Calu3 (cell line): ENCODE measurements at regions of chr14 and their contacts with region 1.

Region 1: DNA sequence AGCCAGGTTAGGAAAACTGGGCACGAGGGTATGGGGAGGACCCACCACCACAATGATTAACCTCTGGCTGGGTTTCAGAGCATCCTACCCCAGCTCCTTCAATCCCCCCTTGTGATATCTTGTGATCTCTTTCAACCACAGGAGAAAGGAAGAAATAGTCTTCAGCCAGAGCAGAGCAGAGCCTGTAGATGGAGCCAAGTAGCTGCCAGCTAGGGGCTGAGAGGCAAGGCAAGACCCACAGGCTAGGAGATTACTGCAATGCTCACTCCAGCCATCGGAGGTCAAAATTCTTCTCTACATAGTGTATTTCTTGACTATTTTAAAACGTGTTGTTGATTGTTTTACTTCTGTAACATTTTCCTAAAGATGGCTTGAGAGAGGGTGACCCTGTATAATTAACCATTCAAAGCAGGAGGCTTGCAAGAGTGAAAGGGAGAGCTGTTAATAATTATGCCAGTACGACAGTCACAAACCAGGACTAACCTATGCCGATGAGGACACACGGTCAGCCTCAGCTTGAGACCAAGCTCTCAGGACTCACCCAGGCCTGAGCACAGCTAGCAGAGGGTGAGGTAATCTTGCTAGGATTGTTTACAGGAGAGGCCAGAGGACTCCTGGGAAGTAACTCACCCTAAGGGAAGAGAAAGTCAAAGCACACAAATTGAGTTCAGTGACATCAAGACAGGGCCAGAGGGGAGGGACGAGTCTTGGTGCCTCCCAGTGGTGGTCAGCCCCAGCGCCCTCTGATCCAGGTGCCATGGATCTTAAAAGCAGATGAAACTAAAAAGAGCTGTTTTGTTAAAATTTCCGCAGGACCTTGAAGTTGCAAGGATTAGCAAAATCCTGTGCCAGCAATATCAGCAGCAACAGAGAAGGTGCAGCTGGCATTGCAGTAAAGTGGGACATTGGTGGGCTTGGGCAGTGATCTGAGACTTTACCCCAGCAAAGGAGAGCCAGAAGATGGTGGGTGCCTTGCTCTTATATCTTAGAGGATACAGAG is 29.8 kb upstream of the CDKN3 start:
- DNase-seq: peak; percentile 56
- H3K4me3 Mint-ChIP-seq: peak overlapping the region; percentile 38
- H3K27ac Mint-ChIP-seq: no peak overlapping the region
- H3K4me1 Mint-ChIP-seq: peaks cover 27% of the 10 kb centered on the region
- H3K27me3 Mint-ChIP-seq: peaks cover 13% of the 10 kb centered on the region
- CTCF ChIP-seq: no peak

Region 2: DNA sequence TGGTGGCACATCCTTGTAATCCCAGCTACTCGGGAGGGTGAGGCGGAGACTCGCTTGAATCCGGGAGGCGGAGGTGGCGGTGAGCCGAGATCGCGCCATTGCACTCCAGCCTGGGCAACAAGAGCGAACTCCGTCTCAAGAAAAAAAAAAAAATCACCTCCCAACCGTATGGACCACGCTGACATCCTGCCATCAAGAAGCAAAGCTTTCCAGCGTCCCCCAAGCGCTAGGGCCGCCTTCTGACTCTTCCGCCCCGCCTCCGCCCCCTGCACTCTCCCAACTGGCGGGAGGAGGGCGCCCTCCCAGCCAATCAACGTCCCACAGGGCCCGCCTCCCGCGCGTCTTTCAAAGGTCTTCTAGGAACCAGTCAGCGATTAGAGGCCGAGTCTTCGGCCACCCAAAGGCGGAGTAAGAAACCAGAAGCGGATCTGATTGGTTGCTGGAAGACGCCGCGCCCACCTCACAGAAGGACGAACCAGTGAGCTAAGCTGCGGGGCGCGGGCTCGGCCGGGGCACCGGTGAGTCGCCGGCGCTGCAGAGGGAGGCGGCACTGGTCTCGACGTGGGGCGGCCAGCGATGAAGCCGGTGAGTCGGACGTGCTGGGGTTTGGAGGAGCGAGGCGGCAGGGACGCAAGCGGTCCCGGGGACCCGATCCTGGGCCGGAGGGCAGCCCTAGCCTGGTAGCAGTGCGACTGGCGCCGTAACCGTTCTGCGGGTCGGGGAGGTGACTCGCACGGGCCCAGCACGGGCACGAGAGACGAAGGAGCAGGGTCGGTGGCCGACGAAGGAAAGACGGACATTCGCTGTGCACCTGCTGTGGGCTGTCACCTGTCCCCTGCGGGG is 29.7 kb after region 1 on chr14 and contains the start of gene CDKN3:
- CTCF ChIA-PET with region 1: interaction called, 11 read pairs
- intact Hi-C with region 1: no loop called
- DNase-seq: peak; percentile 96
- H3K4me3 Mint-ChIP-seq: peak within 1 kb of the TSS; percentile 96
- H3K27ac Mint-ChIP-seq: peak within 1 kb of the TSS; percentile 84
- H3K4me1 Mint-ChIP-seq: peaks cover 15% of the 10 kb centered on the region
- H3K27me3 Mint-ChIP-seq: no peaks in the 10 kb centered on the region
- CTCF ChIP-seq: peak; percentile 45
- total RNA-seq, gene CDKN3: 41.1 and 50.3 TPM in 2 replicates

Region 3: DNA sequence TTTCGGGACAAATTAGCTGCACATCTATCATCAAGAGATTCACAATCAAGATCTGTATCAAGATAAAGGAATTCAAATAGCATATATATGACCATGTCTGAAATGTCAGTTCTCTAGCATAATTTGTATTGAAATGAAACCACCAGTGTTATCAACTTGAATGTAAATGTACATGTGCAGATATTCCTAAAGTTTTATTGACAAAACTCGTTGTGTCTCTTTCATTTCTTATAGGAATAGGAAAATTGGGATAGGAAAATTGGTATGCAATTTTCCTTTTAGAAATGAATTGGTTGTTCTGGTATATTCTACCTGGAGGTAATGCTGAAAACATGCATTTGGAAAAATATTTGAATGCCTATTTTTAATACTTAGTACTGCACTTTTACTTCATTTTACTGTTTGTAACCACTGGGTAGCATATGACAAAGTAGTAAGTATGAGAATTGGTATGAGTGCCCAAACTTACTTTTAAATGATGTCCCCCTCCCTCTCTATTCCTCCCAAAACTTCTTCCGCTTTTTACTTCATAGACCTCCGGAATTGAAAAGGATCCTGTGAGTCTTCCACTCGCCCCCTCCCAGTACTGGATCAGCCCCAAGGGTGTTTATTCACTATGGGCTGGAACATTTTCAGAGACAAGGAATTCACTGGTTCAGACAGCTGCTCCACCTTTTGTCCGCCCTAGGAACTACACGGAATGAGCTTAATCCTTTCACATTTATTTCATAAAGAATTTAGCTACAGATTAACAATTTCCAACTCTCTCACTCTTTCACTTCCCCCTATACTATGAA is 53.2 kb after region 1 on chr14:
- CTCF ChIA-PET with region 1: interaction called, 35 read pairs
- intact Hi-C with region 1: loop called (anchors 1 kb)
- DNase-seq: peak; percentile 48
- H3K4me3 Mint-ChIP-seq: no peak overlapping the region
- H3K27ac Mint-ChIP-seq: no peak overlapping the region
- H3K4me1 Mint-ChIP-seq: peaks cover 8% of the 10 kb centered on the region
- H3K27me3 Mint-ChIP-seq: no peaks in the 10 kb centered on the region
- CTCF ChIP-seq: peak; percentile 44

Region 4: DNA sequence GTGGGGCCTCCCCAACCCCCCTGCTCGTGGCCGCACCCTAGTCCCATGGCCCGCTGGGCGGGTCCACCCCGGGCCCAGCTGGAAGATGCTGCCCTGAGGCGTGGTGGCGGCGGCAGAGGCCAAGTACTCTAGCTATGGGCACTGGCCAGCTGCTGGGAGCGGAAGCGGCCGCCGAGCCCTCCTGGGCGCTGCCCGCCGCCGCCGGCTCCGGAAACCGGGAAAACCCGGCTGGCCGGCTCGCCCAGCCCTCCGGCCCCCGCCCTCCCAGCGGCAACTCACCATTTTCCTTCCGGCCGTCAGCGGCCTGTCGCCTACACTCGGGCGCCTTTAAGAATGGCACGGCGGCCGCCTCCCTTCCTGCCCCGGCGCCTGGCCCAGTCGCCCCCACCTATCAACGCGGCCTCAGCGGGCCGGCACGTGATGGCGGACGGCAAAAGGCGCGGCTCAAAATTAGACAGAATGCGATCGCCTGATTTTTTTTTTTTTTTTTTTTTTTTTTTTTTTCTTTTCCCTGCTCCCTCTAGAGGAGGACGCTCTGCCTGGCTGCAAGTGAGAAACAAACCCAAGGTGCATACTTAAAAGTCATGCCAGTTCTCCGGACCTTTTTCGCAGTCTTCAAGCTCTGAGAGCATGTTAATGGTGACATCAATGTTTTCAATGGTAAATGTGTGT is 121.7 kb after region 1 on chr14 and contains the start of gene GMFB:
- CTCF ChIA-PET with region 1: no interaction called
- intact Hi-C with region 1: loop called (anchors 5 kb)
- DNase-seq: peak; percentile 91
- H3K4me3 Mint-ChIP-seq: peak within 1 kb of the TSS; percentile 79
- H3K27ac Mint-ChIP-seq: peak within 1 kb of the TSS; percentile 97
- H3K4me1 Mint-ChIP-seq: peaks cover 33% of the 10 kb centered on the region
- H3K27me3 Mint-ChIP-seq: no peaks in the 10 kb centered on the region
- CTCF ChIP-seq: no peak
- total RNA-seq, gene GMFB: 39.2 and 43.0 TPM in 2 replicates